Stomach (tissue), 19 donors: ENCODE measurements at regions of chr17 and their contacts with region 1.

Region 1: DNA sequence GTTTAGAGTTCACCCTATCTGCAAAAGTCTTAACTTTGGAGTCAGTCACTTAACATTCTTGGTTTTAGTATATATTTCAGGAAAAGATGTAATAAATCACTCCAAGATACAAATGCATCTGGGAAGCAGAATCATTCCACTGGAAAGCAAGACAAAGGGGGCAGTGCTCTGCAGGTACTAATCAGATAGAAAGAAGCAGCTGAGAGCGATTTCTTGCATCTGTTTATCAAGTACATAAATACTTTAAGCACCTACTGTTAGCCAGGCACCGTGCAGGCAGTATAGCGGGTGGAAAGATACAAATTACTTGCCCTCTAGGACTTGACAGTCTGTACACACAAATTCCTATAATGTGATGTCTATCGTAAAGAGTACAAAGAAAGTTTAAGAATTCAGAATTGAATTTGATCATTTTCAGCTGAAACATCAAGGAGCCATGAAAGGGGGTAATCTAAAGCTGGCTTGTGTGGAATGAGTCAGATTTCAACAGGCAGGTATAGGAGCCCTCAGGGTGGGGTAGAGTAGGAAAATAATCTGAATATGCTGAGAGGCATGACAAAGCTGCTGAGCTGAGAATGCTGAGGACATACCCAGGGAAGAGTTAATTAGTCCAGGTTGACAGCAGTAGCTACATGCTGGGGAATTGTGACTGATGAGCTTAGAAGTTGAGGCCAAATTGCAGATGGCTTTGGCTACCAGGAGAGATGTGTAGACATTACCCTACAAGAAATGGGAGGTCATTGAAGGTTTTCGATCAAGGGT is 110.2 kb downstream of the CA10 start:
- DNase-seq: peak in 1 of 2 donors; percentile 1
- H3K4me3 ChIP-seq: no peak overlapping the region
- H3K27ac ChIP-seq: no peak overlapping the region
- H3K4me1 ChIP-seq: no peaks in the 10 kb centered on the region
- H3K27me3 ChIP-seq: no peaks in the 10 kb centered on the region
- CTCF ChIP-seq: no peak
- EP300 ChIP-seq: no peak
- POLR2A ChIP-seq: no peak

Region 2: GRCh38 chr17:51982189-51982588 is 66.1 kb before region 1 on chr17:
- intact Hi-C with region 1: loop called (anchors 10 kb)
- DNase-seq: no peak
- H3K4me3 ChIP-seq: no peak overlapping the region
- H3K27ac ChIP-seq: no peak overlapping the region
- H3K4me1 ChIP-seq: no peaks in the 10 kb centered on the region
- H3K27me3 ChIP-seq: no peaks in the 10 kb centered on the region
- CTCF ChIP-seq: no peak
- EP300 ChIP-seq: no peak
- POLR2A ChIP-seq: no peak